PC-3 (cell line): ENCODE measurements at regions of chr16 and their contacts with region 1.

Region 1: DNA sequence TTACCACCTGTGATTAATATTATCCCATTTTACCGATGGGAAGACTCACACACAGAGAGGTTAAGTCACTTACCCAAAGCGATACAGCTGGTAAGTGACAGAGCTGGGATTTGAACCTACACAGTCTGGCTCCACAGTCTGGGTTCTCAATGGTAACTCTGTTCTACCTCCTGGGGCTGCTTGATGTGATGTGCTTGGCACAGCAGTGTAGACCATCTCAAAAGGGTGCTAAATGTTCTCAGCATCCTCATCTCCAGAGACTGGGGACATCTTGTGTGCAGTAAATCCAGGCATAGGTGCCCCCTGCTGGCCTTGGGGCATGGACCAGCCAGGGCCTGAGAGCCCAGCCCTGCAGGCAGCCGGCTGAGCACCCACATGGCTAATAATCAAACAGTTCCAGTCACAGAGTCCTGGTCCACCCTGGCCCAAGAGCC is 15.4 kb upstream of the KATNB1 start:
- DNase-seq: peak; percentile 54
- ATAC-seq: peak; percentile 93
- H3K4me3 ChIP-seq: no peak overlapping the region
- H3K27ac ChIP-seq: no peak overlapping the region
- H3K4me1 ChIP-seq: no peaks in the 10 kb centered on the region
- H3K27me3 ChIP-seq: no peaks in the 10 kb centered on the region
- CTCF ChIP-seq: peak; percentile 75

Region 2: GRCh38 chr16:57576429-57576870 is 143.7 kb before region 1 on chr16:
- CTCF ChIA-PET with region 1: no interaction called
- POLR2A ChIA-PET with region 1: no interaction called
- intact Hi-C with region 1: loop called (anchors 1 kb)
- DNase-seq: peak; percentile 79
- ATAC-seq: peak; percentile 93
- H3K4me3 ChIP-seq: no peak overlapping the region
- H3K27ac ChIP-seq: no peak overlapping the region
- H3K4me1 ChIP-seq: no peaks in the 10 kb centered on the region
- H3K27me3 ChIP-seq: no peaks in the 10 kb centered on the region
- CTCF ChIP-seq: peak; percentile 87